ENCODE measurements at regions of chr16 and their contacts with region 1.

Region 1: DNA sequence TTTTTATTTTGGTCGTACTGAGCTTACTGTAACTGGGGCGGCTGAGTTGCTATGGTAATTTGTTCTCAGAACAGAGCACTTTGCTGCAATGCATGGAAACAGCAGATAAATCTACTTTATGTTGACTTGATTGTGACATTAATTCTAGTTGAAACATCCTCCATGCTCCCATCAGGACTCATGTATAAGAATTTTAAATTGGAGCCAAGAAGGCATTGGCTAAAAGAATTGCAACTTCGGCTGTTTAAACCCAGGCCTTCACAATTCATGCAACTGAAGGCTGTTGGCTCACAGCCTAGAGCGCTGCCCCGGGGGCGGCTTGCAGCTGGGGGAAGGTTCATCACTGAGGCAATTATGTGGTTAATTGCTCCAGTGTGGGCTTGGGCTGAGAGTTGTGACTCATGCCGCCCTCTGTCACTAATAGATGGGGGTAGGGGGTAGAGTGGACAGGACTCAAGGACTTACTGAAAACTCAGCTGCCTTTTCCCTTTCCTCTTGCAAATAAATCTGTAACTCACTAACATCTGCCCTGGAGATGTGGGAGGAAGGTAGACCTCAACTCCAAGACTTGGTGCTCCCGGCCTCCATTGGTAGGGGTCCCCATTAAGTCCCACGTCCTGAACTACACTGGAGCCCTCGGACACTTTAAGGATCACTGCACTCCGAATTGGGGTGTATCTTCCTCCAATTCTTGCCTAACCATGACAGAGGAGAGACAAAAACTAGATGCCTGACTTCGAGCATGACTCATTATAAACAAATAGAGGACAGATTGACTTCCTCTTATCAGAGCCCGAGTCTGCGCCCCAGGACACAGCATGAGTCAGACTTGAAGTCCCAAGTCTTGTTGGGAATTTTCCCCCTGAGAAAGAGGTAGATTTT is 37.5 kb downstream of the ERCC4 start:
- DNase-seq: peak; percentile 79
- H3K4me3 Mint-ChIP-seq: peak overlapping the region; percentile 67
- H3K27ac Mint-ChIP-seq: peak overlapping the region; percentile 93
- H3K4me1 Mint-ChIP-seq: peaks cover 67% of the 10 kb centered on the region
- H3K27me3 Mint-ChIP-seq: no peaks in the 10 kb centered on the region
- CTCF ChIP-seq: no peak

Region 2: GRCh38 chr16:13997933-13998332 is 40.5 kb after region 1 on chr16:
- CTCF ChIA-PET with region 1: no interaction called
- intact Hi-C with region 1: loop called (anchors 5 kb)
- DNase-seq: peak; percentile 52
- H3K4me3 Mint-ChIP-seq: peak overlapping the region; percentile 23
- H3K27ac Mint-ChIP-seq: peak overlapping the region; percentile 50
- H3K4me1 Mint-ChIP-seq: peaks cover 33% of the 10 kb centered on the region
- H3K27me3 Mint-ChIP-seq: no peaks in the 10 kb centered on the region
- CTCF ChIP-seq: no peak

Region 3: GRCh38 chr16:14070877-14071575 is 113.6 kb after region 1 on chr16 and contains the start of gene MRTFB:
- CTCF ChIA-PET with region 1: no interaction called
- intact Hi-C with region 1: loop called (anchors 5 kb)
- DNase-seq: peak; percentile 94
- H3K4me3 Mint-ChIP-seq: peak within 1 kb of the TSS; percentile 93
- H3K27ac Mint-ChIP-seq: peak within 1 kb of the TSS; percentile 94
- H3K4me1 Mint-ChIP-seq: peaks cover 43% of the 10 kb centered on the region
- H3K27me3 Mint-ChIP-seq: no peaks in the 10 kb centered on the region
- CTCF ChIP-seq: no peak
- total RNA-seq, gene MRTFB: 67.3 and 69.5 TPM in 2 replicates

Region 4: GRCh38 chr16:14186007-14186794 is 228.8 kb after region 1 on chr16:
- CTCF ChIA-PET with region 1: no interaction called
- intact Hi-C with region 1: loop called (anchors 10 kb)
- DNase-seq: no peak
- H3K4me3 Mint-ChIP-seq: no peak overlapping the region
- H3K27ac Mint-ChIP-seq: peak overlapping the region; percentile 2
- H3K4me1 Mint-ChIP-seq: peaks cover 30% of the 10 kb centered on the region
- H3K27me3 Mint-ChIP-seq: no peaks in the 10 kb centered on the region
- CTCF ChIP-seq: peak; percentile 36